MCF 10A (cell line): ENCODE measurements at regions of chr10 and their contacts with region 1.

Region 1: DNA sequence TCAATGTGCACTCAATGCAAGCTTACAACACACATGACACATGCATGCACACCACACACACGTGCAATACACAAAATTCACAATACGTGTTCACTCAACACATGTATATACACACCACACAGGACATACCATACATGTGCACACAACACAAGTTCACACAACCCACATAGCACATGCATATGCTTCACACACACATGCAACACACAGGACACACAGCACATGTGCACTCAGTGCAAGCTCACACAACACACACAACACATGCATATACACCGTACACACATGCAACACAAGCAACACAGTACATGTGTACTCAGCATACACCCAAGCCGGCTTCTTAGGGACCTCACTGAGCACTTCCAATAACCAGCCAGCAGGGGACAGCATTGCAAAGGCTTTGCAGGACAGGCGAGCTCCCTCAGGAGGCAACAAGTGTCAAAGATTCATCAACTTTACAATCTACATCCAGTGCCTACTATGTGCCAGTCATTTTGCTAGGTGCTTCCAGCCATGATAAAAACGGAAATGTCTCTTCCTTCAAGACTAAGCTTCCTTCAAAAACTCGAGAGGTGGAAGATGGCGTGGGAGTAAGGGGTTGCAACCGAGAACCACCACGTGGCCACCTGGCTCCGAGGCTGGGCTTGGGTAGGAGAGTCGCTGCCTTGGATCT is 61.1 kb downstream of the JCAD start:
- DNase-seq: peak; percentile 90
- H3K4me3 Mint-ChIP-seq: no peak overlapping the region
- H3K27ac Mint-ChIP-seq: no peak overlapping the region
- H3K4me1 Mint-ChIP-seq: peaks cover 41% of the 10 kb centered on the region
- H3K27me3 Mint-ChIP-seq: no peaks in the 10 kb centered on the region
- CTCF ChIP-seq: peak; percentile 96

Region 2: DNA sequence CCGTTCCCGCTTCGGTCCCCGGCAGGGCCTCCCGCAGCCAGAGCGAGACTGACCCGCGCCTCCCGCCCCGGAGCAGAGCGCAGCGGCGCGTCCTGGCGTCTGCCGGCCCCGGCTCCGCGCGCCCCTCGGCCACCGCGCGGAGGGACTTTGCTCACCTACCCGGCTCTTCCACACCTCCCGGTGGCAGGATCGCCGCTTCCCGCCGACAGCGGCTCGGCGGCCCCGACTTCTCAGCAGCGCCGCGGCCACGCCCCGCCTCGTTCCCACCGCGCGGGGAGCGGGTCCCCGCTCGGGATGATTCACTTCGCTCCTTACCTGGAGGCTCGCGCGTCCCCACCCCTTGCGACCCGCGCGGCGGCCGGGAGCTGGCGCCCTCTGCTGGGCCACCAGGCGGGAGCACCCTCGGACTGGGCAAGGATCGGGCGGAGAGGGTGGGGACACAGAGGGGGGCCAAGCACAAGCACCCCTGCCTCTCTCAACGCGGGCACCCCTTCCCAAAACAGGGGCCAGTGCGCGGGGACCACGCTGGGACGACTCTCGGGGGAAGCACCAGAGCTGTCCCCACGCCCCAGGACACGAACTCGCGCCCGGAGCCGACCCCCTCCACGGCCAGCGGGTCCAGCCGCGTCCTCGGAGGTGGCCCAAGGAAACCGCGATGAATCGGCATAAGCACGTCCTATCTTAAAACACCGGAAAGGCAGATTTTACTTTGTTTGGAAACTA is 262.5 kb before region 1 on chr10:
- CTCF ChIA-PET with region 1: interaction called, 3 read pairs
- POLR2A ChIA-PET with region 1: interaction called, 8 read pairs
- intact Hi-C with region 1: loop called (anchors 1 kb)
- DNase-seq: peak; percentile 83
- H3K4me3 Mint-ChIP-seq: peak overlapping the region; percentile 81
- H3K27ac Mint-ChIP-seq: no peak overlapping the region
- H3K4me1 Mint-ChIP-seq: peaks cover 19% of the 10 kb centered on the region
- H3K27me3 Mint-ChIP-seq: no peaks in the 10 kb centered on the region
- CTCF ChIP-seq: peak; percentile 85

Region 3: GRCh38 chr10:29926693-29927048 is 71.6 kb before region 1 on chr10:
- CTCF ChIA-PET with region 1: interaction called, 12 read pairs
- POLR2A ChIA-PET with region 1: interaction called, 3 read pairs
- intact Hi-C with region 1: loop called (anchors 1 kb)
- DNase-seq: peak; percentile 71
- H3K4me3 Mint-ChIP-seq: no peak overlapping the region
- H3K27ac Mint-ChIP-seq: peak overlapping the region; percentile 37
- H3K4me1 Mint-ChIP-seq: peaks cover 35% of the 10 kb centered on the region
- H3K27me3 Mint-ChIP-seq: no peaks in the 10 kb centered on the region
- CTCF ChIP-seq: peak; percentile 71

Region 4: GRCh38 chr10:29977171-29977570 is 21.1 kb before region 1 on chr10:
- CTCF ChIA-PET with region 1: interaction called, 10 read pairs
- POLR2A ChIA-PET with region 1: interaction called, 4 read pairs
- intact Hi-C with region 1: no loop called
- DNase-seq: no peak
- H3K4me3 Mint-ChIP-seq: no peak overlapping the region
- H3K27ac Mint-ChIP-seq: no peak overlapping the region
- H3K4me1 Mint-ChIP-seq: peaks cover 15% of the 10 kb centered on the region
- H3K27me3 Mint-ChIP-seq: no peaks in the 10 kb centered on the region
- CTCF ChIP-seq: no peak

Region 5: DNA sequence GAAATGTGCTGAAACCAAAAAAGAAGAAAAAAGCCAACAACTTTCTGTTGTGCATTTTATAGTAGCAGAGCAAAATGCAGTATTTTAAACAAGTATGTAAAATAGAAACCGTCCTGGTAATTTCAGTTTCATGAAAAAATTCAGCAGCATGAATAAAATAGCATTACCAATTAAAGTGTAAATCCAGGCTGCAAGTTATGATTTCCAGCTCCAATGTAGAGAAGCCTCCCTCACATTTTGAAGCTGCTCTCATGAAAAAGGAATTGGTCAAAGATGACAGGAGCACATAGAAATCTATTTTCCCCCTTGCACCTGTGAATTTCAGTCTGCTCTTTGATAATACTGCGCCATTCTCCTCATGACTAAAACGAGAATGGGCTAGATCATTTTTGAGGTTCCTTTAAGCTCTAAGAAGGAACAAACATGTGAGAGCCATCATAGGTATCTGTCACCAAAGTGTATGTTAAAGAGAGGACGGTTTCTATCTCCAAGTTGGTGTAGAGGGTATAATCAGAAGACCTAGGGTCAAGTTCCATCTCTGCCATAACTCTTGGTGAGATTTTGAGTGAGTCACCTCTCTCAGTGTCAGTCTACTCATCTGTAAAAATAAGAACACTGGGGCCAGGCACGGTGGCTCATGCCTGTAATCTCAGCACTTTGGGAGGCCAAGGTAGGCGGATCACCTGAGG is 243.3 kb after region 1 on chr10:
- CTCF ChIA-PET with region 1: interaction called, 25 read pairs
- POLR2A ChIA-PET with region 1: no interaction called
- intact Hi-C with region 1: loop called (anchors 1 kb)
- DNase-seq: no peak
- H3K4me3 Mint-ChIP-seq: no peak overlapping the region
- H3K27ac Mint-ChIP-seq: no peak overlapping the region
- H3K4me1 Mint-ChIP-seq: peaks cover 6% of the 10 kb centered on the region
- H3K27me3 Mint-ChIP-seq: no peaks in the 10 kb centered on the region
- CTCF ChIP-seq: no peak

Region 6: DNA sequence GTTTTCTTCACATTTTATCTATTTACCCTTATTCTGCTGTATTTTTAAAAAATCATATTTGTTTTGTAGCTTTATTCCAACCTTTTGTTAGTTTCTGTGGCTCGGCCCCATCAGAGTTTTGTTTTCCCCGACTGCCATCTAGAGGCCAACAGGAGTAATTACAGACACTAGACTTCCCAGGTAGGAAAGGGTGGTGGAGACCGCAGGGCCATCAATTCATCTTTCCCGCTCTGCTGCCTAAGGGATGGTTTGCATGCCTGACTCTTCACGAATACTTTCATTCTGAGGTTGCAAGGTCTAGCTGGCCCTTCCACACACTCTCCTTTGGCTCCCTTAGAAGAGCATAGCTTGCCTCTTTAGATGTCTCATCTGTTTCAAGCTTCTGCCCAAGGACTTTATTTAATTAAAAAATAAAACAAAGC is 593.0 kb after region 1 on chr10:
- CTCF ChIA-PET with region 1: no interaction called
- POLR2A ChIA-PET with region 1: no interaction called
- intact Hi-C with region 1: loop called (anchors 2 kb)
- DNase-seq: peak; percentile 77
- H3K4me3 Mint-ChIP-seq: no peak overlapping the region
- H3K27ac Mint-ChIP-seq: no peak overlapping the region
- H3K4me1 Mint-ChIP-seq: no peaks in the 10 kb centered on the region
- H3K27me3 Mint-ChIP-seq: peaks cover 39% of the 10 kb centered on the region
- CTCF ChIP-seq: peak; percentile 56